ENCODE measurements at regions of chr2 and their contacts with region 1.

Region 1: DNA sequence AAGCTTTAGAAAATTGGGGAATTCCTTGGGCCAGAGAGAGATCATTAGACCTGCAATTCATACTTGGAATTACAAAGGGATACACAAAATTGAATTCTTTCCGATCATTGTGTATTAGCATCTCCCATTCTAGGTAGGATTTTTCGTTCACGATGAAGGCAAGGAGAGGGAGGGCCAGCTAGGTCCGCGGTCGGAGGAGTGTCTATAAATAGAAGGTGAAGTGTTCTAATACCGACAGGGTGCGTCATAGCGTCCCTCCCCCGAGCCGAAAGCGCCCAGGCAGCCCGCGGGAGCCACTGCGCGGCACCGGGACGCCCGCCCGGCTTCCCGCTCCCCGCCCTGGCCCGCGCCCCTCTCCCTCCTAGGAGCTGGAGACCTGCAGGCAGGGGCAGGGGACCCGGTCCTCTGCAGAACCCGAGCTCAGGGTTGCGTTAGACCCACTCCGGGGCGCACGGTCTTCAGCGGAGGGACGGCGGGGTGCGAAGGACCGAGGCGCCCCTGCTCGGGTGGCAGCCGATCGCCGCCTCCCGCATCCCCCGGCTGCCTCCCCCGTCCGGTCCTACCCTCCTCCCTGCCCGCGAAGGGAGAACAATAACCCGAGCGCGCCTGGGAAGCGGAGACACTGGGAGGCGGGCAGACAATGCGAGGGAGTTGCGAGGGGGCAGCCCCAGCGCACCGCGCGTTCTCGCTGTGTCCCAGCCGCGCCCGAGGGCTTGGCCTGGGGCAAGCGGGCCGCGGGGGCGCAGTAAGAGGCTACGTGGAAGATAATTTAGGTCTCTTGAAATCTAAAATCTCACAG is 114.2 kb upstream of the SERTAD2 start:
- DNase-seq: peak; percentile 76
- H3K4me3 Mint-ChIP-seq: peak overlapping the region; percentile 87
- H3K27ac Mint-ChIP-seq: peak overlapping the region; percentile 96
- H3K4me1 Mint-ChIP-seq: peaks cover 50% of the 10 kb centered on the region
- H3K27me3 Mint-ChIP-seq: peaks cover 6% of the 10 kb centered on the region

Region 2: DNA sequence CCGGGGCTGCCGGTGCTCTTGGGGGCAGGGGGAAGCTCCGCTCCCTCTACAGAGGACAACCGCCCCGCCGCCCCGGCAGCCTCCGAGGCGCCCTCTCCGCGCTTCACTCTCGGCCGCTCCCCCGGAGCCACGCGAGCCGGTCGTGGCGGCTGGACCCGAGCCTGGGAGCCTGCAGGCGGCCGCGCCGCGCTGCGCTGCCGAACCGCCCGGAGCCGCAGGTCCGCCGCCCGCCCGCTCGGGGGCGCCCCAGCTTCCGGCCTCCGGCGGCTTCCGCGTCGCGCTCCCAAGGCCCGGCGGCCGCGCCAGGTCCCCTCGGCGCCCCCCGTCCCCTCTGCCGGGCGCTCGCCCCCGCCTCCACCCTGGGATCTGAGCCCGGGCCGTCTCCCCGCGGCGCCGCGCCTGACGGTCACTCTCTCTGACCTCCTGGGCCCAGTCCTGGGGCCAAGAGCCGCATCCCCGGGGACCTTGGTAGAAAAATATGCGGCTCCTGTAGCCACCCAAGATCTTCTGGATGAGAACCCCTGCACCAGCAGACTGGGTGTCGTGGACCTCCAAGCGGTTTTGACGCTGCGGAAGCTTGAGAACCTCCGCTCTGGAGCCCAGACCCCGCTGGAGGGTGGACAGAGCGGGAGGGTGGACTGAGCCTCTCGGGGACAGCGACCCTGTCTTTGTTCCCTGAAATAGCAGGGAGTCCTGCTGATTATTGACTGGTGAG is 158.5 kb before region 1 on chr2:
- intact Hi-C with region 1: loop called (anchors 2 kb)
- DNase-seq: peak; percentile 69
- H3K4me3 Mint-ChIP-seq: peak overlapping the region; percentile 66
- H3K27ac Mint-ChIP-seq: peak overlapping the region; percentile 42
- H3K4me1 Mint-ChIP-seq: peaks cover 24% of the 10 kb centered on the region
- H3K27me3 Mint-ChIP-seq: peaks cover 21% of the 10 kb centered on the region

Region 3: GRCh38 chr2:64644177-64645004 is 123.5 kb before region 1 on chr2:
- intact Hi-C with region 1: loop called (anchors 2 kb)
- DNase-seq: peak; percentile 53
- H3K4me3 Mint-ChIP-seq: peak overlapping the region; percentile 87
- H3K27ac Mint-ChIP-seq: peak overlapping the region; percentile 92
- H3K4me1 Mint-ChIP-seq: peaks cover 72% of the 10 kb centered on the region
- H3K27me3 Mint-ChIP-seq: no peaks in the 10 kb centered on the region

Region 4: GRCh38 chr2:64737547-64737946 is 30.3 kb before region 1 on chr2:
- intact Hi-C with region 1: loop called (anchors 1 kb)
- DNase-seq: no peak
- H3K4me3 Mint-ChIP-seq: peak overlapping the region; percentile 28
- H3K27ac Mint-ChIP-seq: peak overlapping the region; percentile 79
- H3K4me1 Mint-ChIP-seq: peaks cover 45% of the 10 kb centered on the region
- H3K27me3 Mint-ChIP-seq: no peaks in the 10 kb centered on the region

Region 5: DNA sequence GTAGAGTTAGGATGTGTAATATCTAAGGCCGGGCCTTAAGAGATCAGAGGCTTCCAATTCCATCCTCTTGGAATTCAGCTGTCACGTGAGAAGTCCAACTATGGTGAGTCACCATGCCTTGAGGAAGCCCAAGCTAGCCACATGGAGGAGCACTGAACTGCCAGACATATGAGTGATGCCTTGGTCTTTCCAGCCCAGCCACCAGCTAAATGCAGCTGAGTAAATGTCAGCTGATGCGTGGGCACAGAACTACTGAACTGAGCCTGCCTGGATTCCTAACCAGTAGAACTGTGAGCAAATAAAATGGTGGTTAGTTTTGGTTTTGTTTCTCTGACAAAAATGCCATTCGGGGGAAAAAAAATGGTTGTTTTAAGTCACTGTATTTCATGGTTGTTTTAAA is 39.5 kb after region 1 on chr2:
- intact Hi-C with region 1: loop called (anchors 1 kb)
- DNase-seq: no peak
- H3K4me3 Mint-ChIP-seq: no peak overlapping the region
- H3K27ac Mint-ChIP-seq: peak overlapping the region; percentile 61
- H3K4me1 Mint-ChIP-seq: peaks cover 35% of the 10 kb centered on the region
- H3K27me3 Mint-ChIP-seq: no peaks in the 10 kb centered on the region

Region 6: GRCh38 chr2:64865073-64865830 is 97.4 kb after region 1 on chr2:
- intact Hi-C with region 1: loop called (anchors 2 kb)
- DNase-seq: peak; percentile 57
- H3K4me3 Mint-ChIP-seq: peak overlapping the region; percentile 74
- H3K27ac Mint-ChIP-seq: no peak overlapping the region
- H3K4me1 Mint-ChIP-seq: peaks cover 4% of the 10 kb centered on the region
- H3K27me3 Mint-ChIP-seq: peaks cover 13% of the 10 kb centered on the region